MCF 10A (cell line): ENCODE measurements at regions of chr19 and their contacts with region 1.

Region 1: DNA sequence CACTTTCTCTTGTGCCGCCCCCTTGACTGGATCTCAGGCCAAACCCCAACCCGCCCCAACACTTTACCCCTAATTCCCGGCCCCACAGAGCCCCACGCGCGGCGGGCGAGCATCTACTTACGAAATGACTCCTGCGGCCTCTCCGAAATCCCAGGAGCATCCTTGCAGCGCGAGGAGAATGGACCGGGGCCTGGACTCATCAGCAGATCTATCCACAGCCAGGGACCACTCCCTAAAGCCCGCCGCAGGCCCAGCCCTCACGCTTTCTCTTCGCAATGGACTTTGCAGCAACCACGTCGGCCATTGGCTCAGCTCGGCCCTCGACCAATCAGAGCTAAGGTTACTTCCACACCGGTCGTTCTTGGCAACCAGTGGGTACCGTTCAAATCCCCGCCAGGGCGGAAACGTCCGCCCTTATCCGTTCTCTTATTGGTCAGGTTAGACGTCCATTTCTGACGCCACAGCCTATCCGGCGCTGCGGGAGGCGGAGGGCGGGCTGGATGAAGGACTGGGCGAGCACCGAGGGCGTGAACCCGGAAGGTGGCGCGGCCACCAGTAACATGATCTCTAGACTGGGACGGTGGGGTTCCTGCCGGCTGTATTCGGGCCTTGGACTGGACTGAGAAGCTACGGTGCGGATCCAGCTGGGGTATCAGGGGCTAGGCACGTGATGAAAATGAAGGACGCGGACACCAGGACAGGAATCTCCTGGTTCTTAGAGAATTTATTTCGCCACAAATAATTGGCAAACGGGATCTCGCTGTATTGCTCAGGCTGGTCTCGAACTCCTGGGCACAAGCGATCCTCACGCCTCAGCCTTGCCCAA is at the starts of genes CEP89 and FAAP24:
- DNase-seq: peak; percentile 100
- H3K4me3 Mint-ChIP-seq: peak within 1 kb of the TSS; percentile 90
- H3K27ac Mint-ChIP-seq: peak within 1 kb of the TSS; percentile 91
- H3K4me1 Mint-ChIP-seq: peaks cover 6% of the 10 kb centered on the region
- H3K27me3 Mint-ChIP-seq: no peaks in the 10 kb centered on the region
- CTCF ChIP-seq: no peak
- total RNA-seq, gene CEP89: 24.7 and 28.4 TPM in 2 replicates
- total RNA-seq, gene FAAP24: 4.1 and 5.1 TPM in 2 replicates

Region 2: DNA sequence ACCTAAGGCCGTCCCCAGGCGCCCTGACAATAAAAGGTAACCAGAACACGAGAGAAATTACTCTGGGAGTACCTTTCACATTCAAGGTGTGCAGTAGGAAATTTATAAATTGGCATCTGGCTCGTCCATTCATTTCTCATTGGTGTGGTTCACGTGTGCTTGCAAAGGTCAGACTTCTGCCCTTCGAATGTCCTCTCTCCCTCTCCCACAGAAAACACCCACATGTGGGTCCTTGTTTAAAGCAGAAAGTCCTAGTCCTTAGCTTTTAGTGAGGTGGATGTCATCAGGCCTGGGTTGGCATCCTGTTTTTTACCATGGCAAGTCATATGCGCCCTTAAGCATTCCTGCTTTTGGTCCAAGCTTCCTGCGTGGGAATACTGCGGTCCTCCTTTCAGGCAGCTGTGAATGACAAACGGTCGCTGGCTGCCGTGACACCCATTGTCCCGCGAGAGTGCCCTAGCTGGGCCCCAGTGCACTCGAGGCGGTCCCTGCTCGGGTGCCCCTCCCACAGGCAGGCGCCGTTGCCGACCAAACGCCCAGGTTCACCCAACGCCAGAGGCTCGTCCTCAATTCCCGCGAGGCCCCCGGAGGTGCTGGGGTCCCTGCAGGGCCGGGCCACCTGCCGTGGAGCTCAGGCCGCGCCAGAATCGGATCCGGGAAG is 280.5 kb before region 1 on chr19 and contains the start of gene NUDT19:
- CTCF ChIA-PET with region 1: interaction called, 3 read pairs
- POLR2A ChIA-PET with region 1: interaction called, 4 read pairs
- intact Hi-C with region 1: loop called (anchors 2 kb)
- DNase-seq: peak; percentile 92
- H3K4me3 Mint-ChIP-seq: peak within 1 kb of the TSS; percentile 79
- H3K27ac Mint-ChIP-seq: peak within 1 kb of the TSS; percentile 96
- H3K4me1 Mint-ChIP-seq: peaks cover 37% of the 10 kb centered on the region
- H3K27me3 Mint-ChIP-seq: no peaks in the 10 kb centered on the region
- CTCF ChIP-seq: no peak
- total RNA-seq, gene NUDT19: 29.4 and 33.4 TPM in 2 replicates

Region 3: DNA sequence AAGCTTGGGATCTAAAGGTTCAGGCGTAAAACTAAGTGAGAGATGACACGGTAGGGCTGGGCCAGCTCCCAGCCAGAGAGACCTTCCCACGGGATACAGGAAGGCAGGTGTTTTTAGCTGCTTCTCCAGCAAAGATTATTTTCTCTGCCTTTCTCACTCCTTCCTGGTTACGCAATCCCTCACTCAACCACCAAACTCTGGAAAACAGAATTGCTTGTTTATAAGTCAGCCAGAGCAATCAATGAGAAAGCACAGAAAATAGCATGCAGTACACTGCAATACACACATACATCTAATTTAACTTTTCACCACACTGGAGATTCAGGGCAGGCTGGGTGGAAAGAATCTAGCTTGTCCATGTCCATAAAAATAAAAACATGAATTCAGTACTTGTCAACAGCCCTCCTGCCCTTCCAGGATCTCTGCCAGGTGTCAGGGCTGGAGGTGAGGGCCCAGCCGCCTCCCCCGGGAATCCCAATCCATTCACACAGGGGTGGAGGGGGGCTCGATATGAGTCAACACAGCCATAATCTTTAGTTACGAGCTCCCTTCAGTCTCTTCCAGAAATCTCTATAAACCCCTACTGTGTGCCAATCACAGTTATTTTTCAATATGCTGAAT is 80.5 kb after region 1 on chr19:
- CTCF ChIA-PET with region 1: interaction called, 11 read pairs
- POLR2A ChIA-PET with region 1: interaction called, 4 read pairs
- intact Hi-C with region 1: no loop called
- DNase-seq: peak; percentile 79
- H3K4me3 Mint-ChIP-seq: no peak overlapping the region
- H3K27ac Mint-ChIP-seq: peak overlapping the region; percentile 87
- H3K4me1 Mint-ChIP-seq: peaks cover 15% of the 10 kb centered on the region
- H3K27me3 Mint-ChIP-seq: no peaks in the 10 kb centered on the region
- CTCF ChIP-seq: no peak

Region 4: DNA sequence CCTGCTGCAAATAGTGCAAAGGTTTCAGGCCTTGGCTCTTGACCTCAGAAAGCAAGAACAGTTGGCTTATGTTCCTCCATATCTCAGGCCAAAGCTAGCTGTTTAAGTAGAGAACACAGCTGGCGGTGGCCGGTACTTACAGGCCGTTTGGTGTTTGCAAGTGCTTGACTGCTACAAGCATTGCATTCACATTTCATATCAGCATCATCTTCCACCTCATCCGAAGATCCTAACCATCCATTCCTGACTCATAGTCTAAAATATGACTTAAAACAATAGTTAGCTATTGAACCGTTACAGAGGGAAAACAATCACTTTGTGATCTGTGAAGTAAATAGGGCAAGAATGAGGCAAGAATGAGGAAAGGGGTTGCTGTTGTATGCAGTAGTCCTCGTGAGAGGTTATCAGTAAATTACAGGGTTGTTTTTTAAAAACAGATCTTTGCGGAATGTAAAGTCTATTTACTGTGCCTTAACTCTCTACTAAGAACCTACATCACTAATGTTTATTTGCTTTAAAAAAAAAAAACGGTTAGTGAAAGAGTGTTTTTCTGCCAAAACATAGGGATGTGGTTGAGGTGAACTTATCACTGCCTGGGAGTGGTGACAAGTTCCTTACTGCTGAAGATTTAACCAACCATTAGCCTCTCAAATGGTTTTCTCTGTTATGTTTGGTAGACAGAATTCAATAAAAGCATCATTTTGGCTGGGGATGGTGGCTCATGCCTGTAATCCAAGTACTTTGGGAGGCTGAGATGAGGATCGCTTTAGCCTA is 138.4 kb after region 1 on chr19:
- CTCF ChIA-PET with region 1: interaction called, 19 read pairs
- POLR2A ChIA-PET with region 1: no interaction called
- intact Hi-C with region 1: no loop called
- DNase-seq: no peak
- H3K4me3 Mint-ChIP-seq: no peak overlapping the region
- H3K27ac Mint-ChIP-seq: no peak overlapping the region
- H3K4me1 Mint-ChIP-seq: no peaks in the 10 kb centered on the region
- H3K27me3 Mint-ChIP-seq: no peaks in the 10 kb centered on the region
- CTCF ChIP-seq: no peak

Region 5: GRCh38 chr19:33125929-33126388 is 154.0 kb after region 1 on chr19:
- CTCF ChIA-PET with region 1: interaction called, 98 read pairs
- POLR2A ChIA-PET with region 1: no interaction called
- intact Hi-C with region 1: no loop called
- DNase-seq: peak; percentile 71
- H3K4me3 Mint-ChIP-seq: no peak overlapping the region
- H3K27ac Mint-ChIP-seq: no peak overlapping the region
- H3K4me1 Mint-ChIP-seq: no peaks in the 10 kb centered on the region
- H3K27me3 Mint-ChIP-seq: no peaks in the 10 kb centered on the region
- CTCF ChIP-seq: peak; percentile 72